HepG2 (cell line): ENCODE measurements at regions of chr18 and their contacts with region 1.

Region 1: GRCh38 chr18:31512203-31512764 is 14.3 kb downstream of the DSG2 start:
- DNase-seq: peak; percentile 97
- ATAC-seq: peak; percentile 93
- H3K4me3 ChIP-seq: no peak overlapping the region; a peak in 1 of 6 replicates
- H3K27ac ChIP-seq: peak overlapping the region; percentile 66
- H3K4me1 ChIP-seq: peaks cover 58% of the 10 kb centered on the region
- H3K27me3 ChIP-seq: no peaks in the 10 kb centered on the region
- CTCF ChIP-seq: no peak
- EP300 ChIP-seq: peak; percentile 93 to 94; a peak in 3 of 4 replicates
- POLR2A ChIP-seq: no peak
- RAD21 ChIP-seq: no peak

Region 2: DNA sequence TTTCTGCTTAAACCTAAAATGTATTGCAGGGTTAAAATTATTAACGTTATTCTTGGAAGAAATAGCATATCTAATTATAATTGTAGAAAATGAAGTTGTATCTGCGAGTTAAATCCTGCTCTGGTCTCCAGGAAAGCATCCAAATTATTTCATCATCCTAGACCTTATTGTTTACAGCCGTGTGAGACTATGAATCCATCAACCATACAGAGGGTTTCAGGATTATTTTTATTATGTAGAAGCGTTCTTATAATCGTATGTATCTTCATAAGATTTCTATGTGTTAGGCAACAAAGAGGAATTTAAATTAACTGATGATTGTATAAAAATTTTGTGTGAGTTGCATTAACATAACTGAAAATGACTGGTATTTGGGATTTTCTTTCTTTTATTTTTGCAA is 455.2 kb before region 1 on chr18:
- CTCF ChIA-PET with region 1: no interaction called
- POLR2A ChIA-PET with region 1: no interaction called
- in situ Hi-C with region 1: no loop called
- intact Hi-C with region 1: loop called (anchors 10 kb)
- DNase-seq: no peak
- ATAC-seq: no peak
- H3K4me3 ChIP-seq: no peak overlapping the region
- H3K27ac ChIP-seq: no peak overlapping the region
- H3K4me1 ChIP-seq: peaks cover 18% of the 10 kb centered on the region
- H3K27me3 ChIP-seq: no peaks in the 10 kb centered on the region
- CTCF ChIP-seq: no peak
- EP300 ChIP-seq: no peak
- POLR2A ChIP-seq: no peak
- RAD21 ChIP-seq: no peak

Region 3: DNA sequence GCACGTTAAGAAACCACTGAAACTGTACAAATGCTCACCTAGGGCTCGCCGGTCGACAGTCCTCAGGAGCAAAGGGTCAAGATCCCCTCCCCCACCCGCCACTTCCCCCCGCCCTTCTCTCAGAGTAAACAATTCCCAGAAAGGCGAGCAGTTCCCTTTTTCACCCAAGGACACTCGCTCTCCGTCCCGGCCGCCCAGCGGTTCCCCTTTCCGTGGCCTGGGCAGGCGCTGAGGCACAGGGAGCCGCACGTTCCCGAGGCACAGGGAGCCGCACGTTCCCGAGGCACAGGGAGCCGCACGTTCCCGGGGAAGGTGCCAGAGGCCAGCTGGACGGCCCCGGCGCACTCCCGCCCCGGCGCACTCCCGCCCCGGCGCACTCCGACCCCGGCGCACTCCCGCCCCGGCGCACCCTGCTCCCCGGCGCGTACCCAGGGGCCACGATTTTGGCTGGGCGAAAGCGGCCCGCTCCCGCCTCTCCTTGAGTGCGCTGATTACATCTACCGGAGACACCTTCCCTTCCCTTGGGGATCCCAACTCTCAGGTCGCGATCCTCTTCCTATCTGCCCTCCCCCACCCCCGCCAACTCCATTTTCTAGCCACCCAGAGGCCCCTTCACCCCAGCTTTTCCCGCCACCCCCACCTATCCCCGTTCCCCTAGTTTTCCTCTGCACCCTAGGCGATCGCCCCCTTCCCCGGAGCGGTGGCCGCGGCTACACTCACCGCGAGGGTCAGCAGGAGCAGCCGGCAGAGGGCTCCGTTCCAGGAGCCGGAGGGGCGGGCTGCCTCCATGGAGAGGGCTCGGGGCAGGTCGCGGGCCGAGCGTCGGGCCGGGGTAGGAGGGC is 410.9 kb before region 1 on chr18:
- CTCF ChIA-PET with region 1: no interaction called
- POLR2A ChIA-PET with region 1: interaction called, 12 read pairs
- in situ Hi-C with region 1: loop called (anchors 10 kb)
- intact Hi-C with region 1: loop called (anchors 5 kb)
- DNase-seq: peak; percentile 37
- ATAC-seq: peak; percentile 89
- H3K4me3 ChIP-seq: peak overlapping the region; percentile 79 to 90 (median 90)
- H3K27ac ChIP-seq: peak overlapping the region; percentile 97
- H3K4me1 ChIP-seq: peaks cover 31% of the 10 kb centered on the region
- H3K27me3 ChIP-seq: no peaks in the 10 kb centered on the region; a peak in 1 of 5 replicates
- CTCF ChIP-seq: peak; percentile 63
- EP300 ChIP-seq: no peak
- POLR2A ChIP-seq: peak; percentile 67 to 72
- RAD21 ChIP-seq: no peak

Region 4: GRCh38 chr18:31241900-31242409 is 270.3 kb before region 1 on chr18:
- CTCF ChIA-PET with region 1: no interaction called
- POLR2A ChIA-PET with region 1: interaction called, 15 read pairs
- in situ Hi-C with region 1: no loop called
- intact Hi-C with region 1: loop called (anchors 1 kb)
- DNase-seq: peak; percentile 98
- ATAC-seq: peak; percentile 86
- H3K4me3 ChIP-seq: no peak overlapping the region
- H3K27ac ChIP-seq: peak overlapping the region; percentile 94
- H3K4me1 ChIP-seq: peaks cover 61% of the 10 kb centered on the region
- H3K27me3 ChIP-seq: no peaks in the 10 kb centered on the region
- CTCF ChIP-seq: peak; percentile 82
- EP300 ChIP-seq: peak; percentile 29 to 94; a peak in 2 of 4 replicates
- POLR2A ChIP-seq: no peak
- RAD21 ChIP-seq: peak; percentile 80

Region 5: DNA sequence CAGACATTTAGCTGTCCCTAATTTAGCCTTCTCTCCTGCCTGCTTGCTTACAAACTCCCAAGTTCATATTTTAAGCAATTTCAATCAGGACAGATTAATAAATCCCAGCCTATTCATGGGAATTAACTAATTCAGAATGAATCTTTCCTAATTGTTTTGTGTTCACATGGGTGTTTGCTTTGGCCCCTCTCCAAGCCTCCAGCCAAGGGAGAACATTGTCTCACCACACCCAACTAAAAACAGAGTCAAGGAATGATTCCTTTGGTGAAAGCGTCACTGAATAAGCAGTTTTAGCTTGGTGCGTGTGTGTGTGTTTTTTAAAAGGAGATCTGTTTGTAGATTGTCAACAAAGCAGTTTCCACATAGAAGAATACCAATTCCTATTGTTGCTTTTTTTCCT is 237.4 kb before region 1 on chr18:
- CTCF ChIA-PET with region 1: no interaction called
- POLR2A ChIA-PET with region 1: no interaction called
- in situ Hi-C with region 1: no loop called
- intact Hi-C with region 1: loop called (anchors 5 kb)
- DNase-seq: peak; percentile 58
- ATAC-seq: no peak
- H3K4me3 ChIP-seq: no peak overlapping the region
- H3K27ac ChIP-seq: no peak overlapping the region
- H3K4me1 ChIP-seq: peaks cover 63% of the 10 kb centered on the region
- H3K27me3 ChIP-seq: no peaks in the 10 kb centered on the region
- CTCF ChIP-seq: no peak
- EP300 ChIP-seq: no peak
- POLR2A ChIP-seq: no peak
- RAD21 ChIP-seq: no peak

Region 6: DNA sequence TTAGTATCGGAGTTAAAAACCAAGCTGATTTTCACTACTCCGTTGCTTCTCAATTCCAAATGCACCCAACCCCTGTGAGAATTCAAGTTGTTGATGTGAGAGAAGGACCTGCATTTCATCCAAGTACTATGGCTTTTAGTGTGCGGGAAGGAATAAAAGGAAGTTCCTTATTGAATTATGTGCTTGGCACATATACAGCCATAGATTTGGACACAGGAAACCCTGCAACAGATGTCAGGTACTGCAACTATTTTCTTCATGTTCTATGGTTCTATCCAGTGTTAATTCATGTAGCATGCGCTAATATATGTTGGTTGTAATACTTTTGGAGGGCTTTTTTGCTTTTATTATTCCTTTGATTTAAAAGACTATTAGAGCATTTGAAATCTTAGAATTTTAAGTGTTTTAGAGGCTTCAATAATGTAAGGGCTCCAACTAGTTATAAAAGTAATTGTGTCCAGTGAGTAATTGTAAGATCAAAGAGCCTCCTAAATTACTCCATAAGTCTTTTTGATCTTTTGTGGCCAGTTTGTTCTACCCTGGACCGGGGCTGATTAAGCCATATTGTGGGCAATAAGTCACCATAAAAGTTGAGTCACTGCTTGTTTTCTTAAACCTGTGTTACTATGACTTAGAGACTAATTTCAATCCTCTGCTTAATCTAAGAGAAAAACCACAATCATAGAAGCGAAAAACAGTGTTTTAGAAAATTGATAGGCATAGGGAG is 112.8 kb before region 1 on chr18:
- CTCF ChIA-PET with region 1: no interaction called
- POLR2A ChIA-PET with region 1: interaction called, 7 read pairs
- in situ Hi-C with region 1: no loop called
- intact Hi-C with region 1: loop called (anchors 5 kb)
- DNase-seq: peak; percentile 55
- ATAC-seq: no peak
- H3K4me3 ChIP-seq: no peak overlapping the region
- H3K27ac ChIP-seq: peak overlapping the region; percentile 93
- H3K4me1 ChIP-seq: peaks cover 92% of the 10 kb centered on the region
- H3K27me3 ChIP-seq: no peaks in the 10 kb centered on the region
- CTCF ChIP-seq: no peak
- EP300 ChIP-seq: peak in 1 of 2 experiments; percentile 79; a peak in 2 of 4 replicates
- POLR2A ChIP-seq: no peak
- RAD21 ChIP-seq: no peak

Region 7: DNA sequence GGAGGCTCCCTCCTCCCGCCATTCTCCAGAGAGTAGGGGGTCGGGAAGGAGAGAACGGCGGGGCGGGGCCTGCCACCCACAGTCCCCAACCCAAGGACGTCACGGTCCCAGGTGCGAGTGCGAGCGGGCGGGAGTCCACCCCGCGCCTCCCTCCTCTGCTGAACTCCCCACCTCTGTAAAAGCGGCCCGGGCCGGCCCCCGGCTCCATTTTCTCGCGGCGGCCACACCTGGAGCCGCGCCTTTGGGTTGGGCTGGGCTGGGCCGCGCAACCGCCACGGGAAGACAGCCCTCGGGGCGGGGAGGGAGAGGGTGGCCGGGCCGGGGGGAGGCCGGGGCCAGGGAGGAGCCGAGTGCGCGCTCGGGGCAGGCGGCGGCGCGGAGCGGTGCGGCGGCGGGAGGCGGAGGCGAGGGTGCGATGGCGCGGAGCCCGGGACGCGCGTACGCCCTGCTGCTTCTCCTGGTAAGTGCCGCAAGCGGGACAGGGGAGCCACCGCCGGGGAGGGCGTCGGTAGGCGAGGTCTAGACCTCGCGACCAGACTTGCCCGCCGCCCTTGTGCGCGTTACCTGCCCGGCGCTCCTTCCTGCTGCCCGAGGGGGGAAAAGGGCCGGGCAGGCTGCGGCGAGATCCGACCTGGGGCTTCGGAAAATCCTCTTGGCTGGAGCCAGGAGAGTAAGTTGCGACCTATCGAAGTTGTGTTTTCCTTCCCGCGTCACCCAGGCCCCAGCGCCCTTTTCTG is 14.3 kb before region 1 on chr18 and contains the start of gene DSG2:
- CTCF ChIA-PET with region 1: no interaction called
- POLR2A ChIA-PET with region 1: interaction called, 11 read pairs
- in situ Hi-C with region 1: no loop called
- intact Hi-C with region 1: loop called (anchors 1 kb)
- DNase-seq: peak; percentile 43
- ATAC-seq: peak; percentile 90
- H3K4me3 ChIP-seq: peak within 1 kb of the TSS; percentile 94 to 100 (median 99)
- H3K27ac ChIP-seq: peak within 1 kb of the TSS; percentile 82
- H3K4me1 ChIP-seq: peaks cover 27% of the 10 kb centered on the region
- H3K27me3 ChIP-seq: no peaks in the 10 kb centered on the region; a peak in 1 of 5 replicates
- CTCF ChIP-seq: no peak
- EP300 ChIP-seq: no peak
- POLR2A ChIP-seq: peak; percentile 58 to 70
- RAD21 ChIP-seq: no peak
- total RNA-seq, gene DSG2: 23.3 and 24.4 TPM in 2 replicates